Prostate gland (tissue), 2 donors: ENCODE measurements at regions of chr22 and their contacts with region 1.

Region 1: DNA sequence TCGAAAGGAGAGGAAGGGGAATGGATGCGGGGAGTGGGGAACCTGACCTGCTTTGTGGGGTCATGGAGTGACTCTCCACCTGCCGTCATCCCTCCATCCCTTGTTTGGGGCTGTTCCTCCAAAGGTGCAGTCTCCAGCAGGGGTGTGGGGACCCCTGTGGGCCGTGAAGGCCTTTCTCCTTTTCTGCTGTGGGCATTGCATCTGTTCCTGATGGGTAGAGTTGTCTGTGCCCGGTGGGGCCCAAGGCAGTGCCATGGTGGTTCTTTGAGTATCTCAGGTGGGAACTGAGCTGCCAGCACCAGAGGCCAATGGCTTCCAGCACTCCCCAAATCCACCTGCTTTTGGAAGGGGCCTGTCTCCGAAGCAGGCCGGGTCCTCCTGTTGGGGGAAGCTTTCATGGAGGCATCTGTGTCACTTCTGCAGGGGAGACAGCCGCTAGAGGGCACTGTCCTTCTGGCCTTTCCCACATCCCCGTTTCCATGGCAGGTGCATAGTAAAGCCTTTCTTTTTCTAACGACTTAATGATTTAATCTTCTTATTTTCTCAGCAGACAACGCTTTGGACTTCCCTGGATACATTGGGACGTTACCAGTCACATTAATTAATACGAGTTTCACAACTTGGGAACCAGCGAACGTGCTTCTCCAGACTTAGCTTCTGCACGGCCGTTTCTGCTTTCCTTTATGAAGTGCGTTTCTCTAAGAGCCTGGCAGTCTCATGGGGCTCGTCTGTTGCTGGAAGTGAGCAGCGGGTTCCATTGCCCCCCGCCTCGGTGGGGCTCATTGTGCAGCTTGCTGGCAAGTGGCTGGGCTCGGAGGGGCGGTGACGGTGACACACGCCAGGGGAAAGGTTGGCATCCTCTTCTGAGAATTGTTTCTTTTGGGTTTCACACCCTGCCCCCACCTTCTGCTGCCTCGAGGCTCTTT is 57.1 kb downstream of the PARVB start:
- DNase-seq: peak; percentile 73
- H3K4me3 ChIP-seq: no peak overlapping the region
- H3K27ac ChIP-seq: no peak overlapping the region
- H3K4me1 ChIP-seq: no peaks in the 10 kb centered on the region
- H3K27me3 ChIP-seq: no peaks in the 10 kb centered on the region
- CTCF ChIP-seq: peak; percentile 56 to 85 (median 75)
- POLR2A ChIP-seq: no peak

Region 2: GRCh38 chr22:44329179-44329796 is 248.1 kb after region 1 on chr22:
- intact Hi-C with region 1: loop called (anchors 10 kb)
- DNase-seq: no peak
- H3K4me3 ChIP-seq: no peak overlapping the region
- H3K27ac ChIP-seq: no peak overlapping the region
- H3K4me1 ChIP-seq: no peaks in the 10 kb centered on the region
- H3K27me3 ChIP-seq: peaks cover 7% of the 10 kb centered on the region
- CTCF ChIP-seq: no peak
- POLR2A ChIP-seq: no peak

Region 3: GRCh38 chr22:44351685-44352377 is 270.6 kb after region 1 on chr22:
- intact Hi-C with region 1: loop called (anchors 10 kb)
- DNase-seq: peak; percentile 14
- H3K4me3 ChIP-seq: no peak overlapping the region
- H3K27ac ChIP-seq: no peak overlapping the region
- H3K4me1 ChIP-seq: no peaks in the 10 kb centered on the region
- H3K27me3 ChIP-seq: peaks cover 3% of the 10 kb centered on the region
- CTCF ChIP-seq: no peak
- POLR2A ChIP-seq: no peak

Region 4: DNA sequence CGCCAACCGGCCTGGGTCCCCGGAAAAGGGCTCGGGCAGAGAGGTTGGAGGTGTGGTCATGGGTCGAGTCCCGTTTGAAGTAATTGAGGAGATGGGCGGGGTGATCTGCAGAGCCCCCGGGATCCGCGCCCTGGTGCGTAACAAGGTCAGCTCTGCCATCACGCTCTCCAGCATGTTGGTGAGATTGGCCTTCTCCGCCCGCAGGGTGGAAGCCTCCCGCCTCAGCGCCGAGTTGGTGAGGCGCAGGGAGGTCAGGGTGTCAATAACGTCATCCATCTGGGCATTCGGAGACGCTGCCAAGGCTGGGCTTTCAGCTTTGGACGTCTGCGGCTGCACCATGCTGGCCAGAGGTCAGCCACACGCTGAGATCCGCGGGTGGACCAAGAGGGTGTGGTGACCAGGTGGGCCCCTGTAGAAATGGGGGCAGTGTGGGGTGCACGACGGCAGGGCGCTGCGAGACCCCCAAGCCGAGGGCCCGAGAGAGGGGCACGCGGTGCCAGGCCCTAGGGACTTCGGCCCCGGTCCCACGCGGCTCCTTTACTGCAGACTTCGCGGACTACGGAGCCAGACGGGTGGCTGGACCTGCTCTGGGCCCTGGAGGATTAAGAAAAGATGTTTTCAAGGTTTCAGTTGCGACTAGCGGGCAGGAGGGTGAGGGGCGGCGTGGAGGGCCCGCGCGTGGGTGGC is 416.2 kb after region 1 on chr22:
- intact Hi-C with region 1: loop called (anchors 10 kb)
- DNase-seq: no peak
- H3K4me3 ChIP-seq: peak overlapping the region; percentile 77 to 95
- H3K27ac ChIP-seq: peak overlapping the region; percentile 62 to 75
- H3K4me1 ChIP-seq: peaks cover 6% of the 10 kb centered on the region
- H3K27me3 ChIP-seq: no peaks in the 10 kb centered on the region
- CTCF ChIP-seq: no peak
- POLR2A ChIP-seq: no peak